Right ventricle myocardium inferior (tissue), 1 donor: ENCODE measurements at regions of chr5 and their contacts with region 1.

Region 1: GRCh38 chr5:74500110-74500917 is 140.2 kb downstream of the ENC1 start:
- DNase-seq: no peak
- ATAC-seq: no peak

Region 2: DNA sequence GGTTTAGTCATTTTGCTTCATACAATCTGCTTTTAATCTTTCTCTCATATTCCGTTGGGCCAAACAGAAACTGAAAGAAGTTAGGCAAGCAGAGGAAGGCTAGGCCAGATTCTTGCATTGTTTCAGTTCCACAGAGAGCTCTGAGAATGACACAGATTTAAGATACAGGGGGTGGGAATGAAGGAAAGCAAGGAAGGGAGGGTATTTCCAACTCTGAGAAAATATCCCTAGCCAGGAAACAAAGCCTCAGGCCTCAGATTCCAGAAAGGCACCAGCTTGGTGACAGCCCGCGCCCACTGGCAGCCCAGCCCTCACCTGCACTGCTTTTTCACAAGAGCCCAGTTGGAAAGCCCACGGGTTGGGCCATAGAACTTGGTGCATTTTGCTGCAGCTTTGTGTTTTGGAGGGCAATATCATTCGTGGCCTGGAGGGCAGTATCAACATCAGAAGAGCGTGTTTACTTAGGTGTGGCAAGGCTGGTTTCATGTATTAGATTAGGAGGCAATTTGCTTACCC is 76.7 kb after region 1 on chr5:
- intact Hi-C with region 1: loop called (anchors 2 kb)
- DNase-seq: no peak
- ATAC-seq: peak; percentile 74

Region 3: GRCh38 chr5:74665273-74665672 is 165.0 kb after region 1 on chr5:
- intact Hi-C with region 1: no loop called
- DNase-seq: no peak
- ATAC-seq: no peak

Region 4: DNA sequence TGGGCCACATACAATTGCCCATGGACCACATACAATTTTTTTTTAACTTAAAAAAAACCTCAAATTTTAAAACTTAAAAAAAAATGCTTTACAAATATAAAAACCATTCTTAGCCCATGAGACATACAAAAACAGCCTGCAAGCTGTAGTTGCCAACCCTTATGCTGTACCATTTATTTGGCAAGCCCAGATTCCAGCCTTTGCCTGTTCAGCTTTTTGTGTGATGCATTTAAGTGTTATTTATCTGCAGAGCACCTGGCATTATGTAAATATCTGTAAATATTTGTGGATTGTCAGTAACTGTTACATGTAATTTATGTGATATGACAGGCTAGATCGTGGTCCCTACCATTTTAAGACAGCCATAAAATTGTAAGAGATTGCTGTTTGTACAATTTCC is 217.3 kb after region 1 on chr5:
- intact Hi-C with region 1: no loop called
- DNase-seq: no peak
- ATAC-seq: no peak